HepG2 (cell line): ENCODE measurements at regions of chr11 and their contacts with region 1.

Region 1: DNA sequence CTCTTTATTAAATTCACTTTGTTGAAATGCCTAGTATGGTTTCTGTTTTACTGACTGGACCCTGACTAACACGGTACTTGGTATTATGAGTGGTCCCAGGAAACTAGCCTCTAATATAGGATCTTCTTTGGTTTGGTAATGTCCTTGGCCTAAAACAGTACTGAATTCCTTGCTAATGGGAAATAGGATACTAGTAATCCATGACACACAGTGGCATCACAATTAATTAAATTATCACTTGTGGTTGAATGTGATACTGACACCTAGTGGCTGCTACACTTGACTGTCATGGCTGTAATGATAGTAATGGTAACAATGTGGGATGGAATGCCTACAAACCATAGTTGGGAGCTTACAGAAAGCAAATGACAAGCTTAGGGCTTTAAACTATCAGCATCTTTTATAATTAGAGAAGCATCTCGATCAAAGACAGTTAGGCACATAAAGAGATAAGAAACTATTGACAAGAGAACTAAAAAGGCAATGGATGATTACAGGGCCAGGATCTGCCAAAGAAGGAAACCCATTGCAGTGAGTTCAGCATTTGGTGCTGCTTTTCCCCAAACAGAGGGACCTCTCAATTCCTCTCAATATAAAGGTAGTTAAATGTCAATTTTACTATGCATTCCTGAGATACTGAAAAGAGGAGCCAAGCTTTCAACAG is 8.6 kb downstream of the DNHD1 start:
- DNase-seq: peak; percentile 25
- ATAC-seq: peak; percentile 78
- H3K4me3 ChIP-seq: no peak overlapping the region
- H3K27ac ChIP-seq: no peak overlapping the region
- H3K4me1 ChIP-seq: no peaks in the 10 kb centered on the region
- H3K27me3 ChIP-seq: no peaks in the 10 kb centered on the region; a peak in 1 of 5 replicates
- CTCF ChIP-seq: peak; percentile 75
- EP300 ChIP-seq: no peak
- POLR2A ChIP-seq: no peak
- RAD21 ChIP-seq: 0 out of 2 replicates have a peak, but pooled peaks have one; percentile 36

Region 2: DNA sequence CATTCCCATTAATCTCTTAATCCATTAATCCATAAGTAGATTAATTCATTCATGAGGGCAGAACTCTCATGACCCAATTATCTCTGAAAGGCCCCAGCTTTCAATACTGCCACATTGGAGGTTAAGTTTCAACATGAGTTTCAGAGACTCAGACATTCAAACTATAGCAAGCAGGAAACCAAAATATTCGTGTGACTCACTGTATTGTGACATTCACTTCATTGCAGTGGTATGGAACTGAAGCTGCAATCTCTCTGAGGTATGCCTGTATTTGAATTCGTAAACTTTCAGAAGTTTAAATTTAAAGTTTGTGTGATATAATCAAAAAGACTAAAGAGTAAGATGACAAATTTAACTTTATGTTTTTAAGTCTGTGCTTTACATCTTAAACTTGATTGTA is 1462.3 kb before region 1 on chr11:
- CTCF ChIA-PET with region 1: no interaction called
- POLR2A ChIA-PET with region 1: no interaction called
- in situ Hi-C with region 1: no loop called
- intact Hi-C with region 1: no loop called
- DNase-seq: no peak
- ATAC-seq: no peak
- H3K4me3 ChIP-seq: no peak overlapping the region
- H3K27ac ChIP-seq: no peak overlapping the region
- H3K4me1 ChIP-seq: no peaks in the 10 kb centered on the region
- H3K27me3 ChIP-seq: no peaks in the 10 kb centered on the region
- CTCF ChIP-seq: no peak
- EP300 ChIP-seq: no peak
- POLR2A ChIP-seq: no peak
- RAD21 ChIP-seq: no peak

Region 3: DNA sequence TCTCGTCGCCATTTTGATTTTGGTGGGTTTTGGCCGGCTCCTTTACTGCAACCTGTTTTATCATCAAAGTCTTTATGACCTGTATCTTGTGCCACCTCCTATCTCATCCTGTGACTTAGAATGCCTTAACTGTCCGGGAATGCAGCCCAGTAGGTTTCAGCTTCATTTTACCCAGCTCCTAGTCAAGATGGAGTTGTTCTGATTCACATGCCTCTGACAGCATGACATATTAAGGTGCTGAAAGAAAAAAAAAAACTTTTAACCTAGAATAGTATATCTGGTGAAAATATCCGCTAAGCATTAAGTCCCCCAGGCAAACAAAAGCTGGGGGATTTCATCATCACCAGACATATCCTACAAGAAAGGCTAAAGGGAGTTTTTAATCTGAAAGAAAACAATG is 344.6 kb before region 1 on chr11:
- CTCF ChIA-PET with region 1: no interaction called
- POLR2A ChIA-PET with region 1: no interaction called
- in situ Hi-C with region 1: no loop called
- intact Hi-C with region 1: no loop called
- DNase-seq: no peak
- ATAC-seq: no peak
- H3K4me3 ChIP-seq: no peak overlapping the region
- H3K27ac ChIP-seq: no peak overlapping the region
- H3K4me1 ChIP-seq: peaks cover 10% of the 10 kb centered on the region
- H3K27me3 ChIP-seq: no peaks in the 10 kb centered on the region
- CTCF ChIP-seq: no peak
- EP300 ChIP-seq: no peak
- POLR2A ChIP-seq: no peak
- RAD21 ChIP-seq: no peak

Region 4: GRCh38 chr11:6377902-6378639 is 127.6 kb before region 1 on chr11:
- CTCF ChIA-PET with region 1: interaction called, 23 read pairs
- POLR2A ChIA-PET with region 1: interaction called, 7 read pairs
- in situ Hi-C with region 1: loop called (anchors 10 kb)
- intact Hi-C with region 1: loop called (anchors 1 kb)
- DNase-seq: no peak
- ATAC-seq: no peak
- H3K4me3 ChIP-seq: no peak overlapping the region
- H3K27ac ChIP-seq: no peak overlapping the region
- H3K4me1 ChIP-seq: no peaks in the 10 kb centered on the region
- H3K27me3 ChIP-seq: peaks cover 1 to 8% of the 10 kb centered on the region in 2 experiments; a peak in 2 of 5 replicates
- CTCF ChIP-seq: no peak
- EP300 ChIP-seq: no peak
- POLR2A ChIP-seq: no peak
- RAD21 ChIP-seq: no peak